Activated CD4-positive, alpha-beta T cell treated with anti-CD3 and anti-CD28 coated beads, Interleukin-2, amount 10 ng/mL, durations not matched to agents 24 days and 14 days (primary cell): ENCODE measurements at regions of chr1 and their contacts with region 1.

Region 1: GRCh38 chr1:111720274-111720976 is 18.8 kb downstream of the INKA2 start:
- DNase-seq: peak; percentile 59
- H3K4me3 Mint-ChIP-seq: no peak overlapping the region
- H3K27ac Mint-ChIP-seq: peak overlapping the region; percentile 4
- H3K4me1 Mint-ChIP-seq: peaks cover 15% of the 10 kb centered on the region
- H3K27me3 Mint-ChIP-seq: no peaks in the 10 kb centered on the region

Region 2: DNA sequence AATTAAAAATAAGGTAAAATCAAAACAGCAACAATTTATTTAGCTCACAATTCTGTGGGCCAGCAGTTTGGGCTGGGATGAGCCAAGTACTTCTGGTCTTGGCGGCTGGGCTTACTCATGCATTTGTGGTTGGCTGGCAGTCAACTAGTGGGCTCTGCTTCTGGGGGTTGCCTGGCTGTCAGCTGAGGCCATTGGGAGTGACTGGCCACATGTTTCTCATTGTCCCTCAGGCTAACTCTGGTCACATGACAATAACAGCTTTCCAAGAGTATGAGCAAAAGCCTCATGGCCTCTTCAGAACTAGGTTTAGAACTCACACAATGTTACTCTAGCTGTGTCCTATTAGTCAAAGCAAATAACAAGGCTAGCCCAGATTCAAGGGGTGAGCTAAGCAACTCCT is 445.3 kb before region 1 on chr1:
- intact Hi-C with region 1: no loop called
- DNase-seq: peak; percentile 69
- H3K4me3 Mint-ChIP-seq: no peak overlapping the region
- H3K27ac Mint-ChIP-seq: peak overlapping the region; percentile 58
- H3K4me1 Mint-ChIP-seq: peaks cover 23% of the 10 kb centered on the region
- H3K27me3 Mint-ChIP-seq: peaks cover 25% of the 10 kb centered on the region

Region 3: DNA sequence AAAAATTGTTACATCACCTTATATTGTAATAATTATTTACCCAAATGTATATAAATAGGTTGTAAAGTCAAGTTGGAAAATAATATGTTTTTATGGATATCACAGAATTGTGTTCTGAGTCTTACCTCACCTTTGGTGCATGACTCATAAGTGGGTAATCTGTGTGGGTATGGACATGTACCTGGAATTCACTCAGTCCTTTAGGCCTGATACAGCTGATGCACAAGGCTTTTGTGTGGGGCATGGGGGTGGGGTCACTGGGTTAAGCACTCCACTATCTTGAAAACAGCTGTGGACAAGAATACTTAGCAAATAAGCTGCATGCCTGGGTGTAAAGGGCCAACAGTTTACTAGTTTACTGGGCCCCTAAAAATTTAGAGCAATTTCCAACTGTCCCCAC is 15.6 kb before region 1 on chr1:
- intact Hi-C with region 1: no loop called
- DNase-seq: no peak
- H3K4me3 Mint-ChIP-seq: no peak overlapping the region
- H3K27ac Mint-ChIP-seq: no peak overlapping the region
- H3K4me1 Mint-ChIP-seq: peaks cover 36% of the 10 kb centered on the region
- H3K27me3 Mint-ChIP-seq: no peaks in the 10 kb centered on the region

Region 4: GRCh38 chr1:111739194-111739924 is 18.9 kb after region 1 on chr1 and contains the start of gene INKA2:
- intact Hi-C with region 1: loop called (anchors 2 kb)
- DNase-seq: peak; percentile 95
- H3K4me3 Mint-ChIP-seq: peak within 1 kb of the TSS; percentile 96
- H3K27ac Mint-ChIP-seq: peak within 1 kb of the TSS; percentile 92
- H3K4me1 Mint-ChIP-seq: peaks cover 21% of the 10 kb centered on the region
- H3K27me3 Mint-ChIP-seq: peaks cover 52% of the 10 kb centered on the region
- total RNA-seq, gene INKA2: 2.4 and 2.6 TPM in 2 replicates

Region 5: GRCh38 chr1:111747282-111747734 is 26.9 kb after region 1 on chr1:
- intact Hi-C with region 1: loop called (anchors 1 kb)
- DNase-seq: peak; percentile 93
- H3K4me3 Mint-ChIP-seq: no peak overlapping the region
- H3K27ac Mint-ChIP-seq: no peak overlapping the region
- H3K4me1 Mint-ChIP-seq: peaks cover 18% of the 10 kb centered on the region
- H3K27me3 Mint-ChIP-seq: peaks cover 23% of the 10 kb centered on the region

Region 6: DNA sequence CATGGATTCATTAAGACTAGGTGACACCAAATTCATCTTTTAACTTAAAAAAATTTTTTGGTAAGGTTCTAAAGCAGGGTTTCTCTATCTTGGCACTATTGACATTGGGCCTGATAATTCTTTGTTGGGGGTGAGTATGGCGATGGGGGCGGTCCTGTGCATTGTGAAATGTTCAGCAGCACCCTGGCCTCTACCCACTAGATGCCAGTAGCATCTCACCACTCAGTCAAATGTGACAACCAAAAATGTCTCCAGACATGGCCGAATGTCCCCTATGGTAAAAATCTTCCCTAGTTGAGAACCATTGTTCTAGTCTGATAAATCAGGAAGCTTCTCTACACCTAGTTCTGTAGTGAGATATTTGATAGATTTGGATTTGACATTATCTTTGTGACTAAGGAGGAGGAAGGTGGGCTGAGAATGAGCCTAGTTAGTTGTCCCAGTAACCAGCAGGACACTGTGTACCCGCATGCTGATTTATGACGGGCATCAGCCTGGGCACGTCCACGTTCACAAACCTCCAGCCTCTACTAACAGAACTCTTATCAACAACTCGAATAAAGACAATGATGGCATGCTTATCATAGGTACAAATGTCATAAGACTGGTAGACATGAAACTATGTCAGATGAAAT is 164.5 kb after region 1 on chr1:
- intact Hi-C with region 1: no loop called
- DNase-seq: no peak
- H3K4me3 Mint-ChIP-seq: no peak overlapping the region
- H3K27ac Mint-ChIP-seq: no peak overlapping the region
- H3K4me1 Mint-ChIP-seq: no peaks in the 10 kb centered on the region
- H3K27me3 Mint-ChIP-seq: peaks cover 20% of the 10 kb centered on the region